ENCODE measurements at regions of chr3 and their contacts with region 1.

Region 1: DNA sequence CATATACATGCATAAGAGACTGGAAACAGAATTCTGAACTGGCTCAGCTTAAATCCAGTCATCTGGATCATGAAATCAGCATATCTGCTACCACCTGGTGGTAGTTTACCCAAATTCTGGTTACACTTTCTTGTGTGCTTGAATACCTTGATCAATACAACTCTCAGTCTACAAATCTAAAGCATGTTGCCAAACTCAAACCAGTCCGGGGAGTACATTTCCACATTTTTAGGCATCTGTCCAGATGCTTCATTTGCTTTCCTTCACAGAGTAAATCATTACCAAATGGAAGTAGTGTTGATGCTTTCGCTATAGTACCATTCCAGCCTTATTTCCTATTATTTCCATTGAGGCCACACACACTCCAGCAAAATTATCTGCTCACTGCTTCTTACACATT is 126.4 kb downstream of the P2RY1 start:
- DNase-seq: peak; percentile 60
- H3K4me3 Mint-ChIP-seq: no peak overlapping the region
- H3K27ac Mint-ChIP-seq: peak overlapping the region; percentile 40
- H3K4me1 Mint-ChIP-seq: peaks cover 14% of the 10 kb centered on the region
- H3K27me3 Mint-ChIP-seq: no peaks in the 10 kb centered on the region
- CTCF ChIP-seq: peak; percentile 33

Region 2: DNA sequence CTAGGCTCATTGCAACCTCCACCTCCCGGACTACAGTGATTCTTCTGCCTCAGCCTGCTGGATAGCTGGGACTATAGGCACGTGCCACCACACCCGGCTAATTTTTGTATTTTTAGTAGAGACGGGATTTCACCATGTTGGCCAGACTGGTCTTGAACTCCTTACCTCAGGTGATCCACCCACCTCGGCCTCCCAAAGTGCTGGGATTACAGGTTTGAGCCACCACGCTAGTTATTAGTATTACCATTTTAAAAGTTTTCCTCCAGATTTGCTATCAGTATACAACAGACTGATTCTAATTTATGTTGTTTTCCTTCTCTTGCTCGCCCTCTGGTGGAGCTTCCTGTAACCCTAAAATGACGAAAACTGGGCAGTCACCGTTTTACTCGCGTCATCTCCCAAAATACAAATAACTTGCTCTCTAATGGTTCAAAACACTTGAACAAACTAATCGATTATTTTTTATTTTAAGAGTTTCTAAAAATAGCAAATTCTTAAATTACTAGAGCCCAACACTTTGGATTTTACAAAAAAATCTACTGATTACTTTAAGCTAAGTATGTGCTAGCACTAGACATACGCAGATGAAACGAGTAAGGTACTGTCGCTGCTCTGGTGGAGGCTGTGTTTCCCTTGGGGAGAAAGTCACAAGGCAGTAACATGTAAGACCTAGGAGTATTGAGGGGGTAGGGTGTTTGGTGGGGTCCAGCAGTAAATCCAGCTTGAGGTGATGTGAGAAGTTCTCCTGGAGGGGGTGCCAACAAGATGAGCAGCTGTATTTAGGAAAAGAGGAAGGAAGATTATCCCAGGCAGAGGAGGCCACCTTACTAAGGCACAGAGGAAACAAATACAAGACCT is 489.3 kb before region 1 on chr3:
- CTCF ChIA-PET with region 1: interaction called, 4 read pairs
- POLR2A ChIA-PET with region 1: interaction called, 3 read pairs
- intact Hi-C with region 1: loop called (anchors 1 kb)
- DNase-seq: peak; percentile 59
- H3K4me3 Mint-ChIP-seq: no peak overlapping the region
- H3K27ac Mint-ChIP-seq: no peak overlapping the region
- H3K4me1 Mint-ChIP-seq: no peaks in the 10 kb centered on the region
- H3K27me3 Mint-ChIP-seq: no peaks in the 10 kb centered on the region
- CTCF ChIP-seq: peak; percentile 42

Region 3: DNA sequence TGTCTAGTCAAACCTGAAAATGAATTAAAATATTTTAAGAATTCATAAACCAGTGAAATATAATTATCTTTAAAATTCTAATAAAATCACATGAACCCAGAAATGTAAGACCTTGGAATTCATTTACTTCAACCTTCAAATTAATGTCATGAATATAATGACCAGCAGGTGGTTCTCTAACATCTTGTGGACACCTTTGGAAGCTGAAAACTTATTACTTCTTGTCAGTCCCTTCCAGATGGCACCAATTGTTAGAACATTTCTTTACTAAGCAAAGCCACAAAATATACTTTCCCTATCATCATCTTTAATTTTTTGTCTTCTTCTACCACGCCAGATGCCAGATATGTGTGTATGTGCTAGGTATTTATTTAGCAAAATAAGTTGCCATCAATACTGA is 452.6 kb before region 1 on chr3:
- CTCF ChIA-PET with region 1: interaction called, 28 read pairs
- POLR2A ChIA-PET with region 1: no interaction called
- intact Hi-C with region 1: no loop called
- DNase-seq: peak; percentile 31
- H3K4me3 Mint-ChIP-seq: no peak overlapping the region
- H3K27ac Mint-ChIP-seq: no peak overlapping the region
- H3K4me1 Mint-ChIP-seq: no peaks in the 10 kb centered on the region
- H3K27me3 Mint-ChIP-seq: no peaks in the 10 kb centered on the region
- CTCF ChIP-seq: peak; percentile 35

Region 4: DNA sequence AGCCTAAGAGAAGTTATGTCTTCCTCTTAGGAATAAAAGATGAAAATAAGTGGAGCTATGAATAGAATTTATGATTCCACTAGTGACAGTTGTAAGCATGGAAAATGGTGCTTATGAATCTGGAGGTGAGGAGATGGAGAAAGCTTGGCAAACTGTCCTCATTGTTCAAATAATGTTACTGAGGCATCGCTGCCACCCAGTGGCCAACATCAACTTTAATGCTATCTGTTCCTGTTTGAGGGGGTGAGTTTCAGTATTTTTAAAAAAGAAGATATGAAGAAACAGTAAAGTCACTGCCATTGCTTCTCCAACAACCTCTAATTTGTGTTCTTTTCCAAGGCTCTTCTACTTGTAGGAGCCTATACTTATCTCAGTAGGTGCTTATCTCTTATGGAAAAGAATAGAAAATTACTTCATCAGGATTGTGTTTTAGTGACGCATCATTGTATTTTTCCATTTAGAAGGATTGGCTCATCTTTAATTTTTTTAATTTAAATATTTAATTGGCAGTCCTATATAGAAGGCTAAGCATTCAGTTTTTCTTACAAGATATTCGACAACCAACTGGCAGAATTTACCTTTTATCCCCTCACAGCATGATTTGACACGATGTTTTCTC is 386.8 kb before region 1 on chr3:
- CTCF ChIA-PET with region 1: interaction called, 3 read pairs
- POLR2A ChIA-PET with region 1: no interaction called
- intact Hi-C with region 1: loop called (anchors 10 kb)
- DNase-seq: peak; percentile 69
- H3K4me3 Mint-ChIP-seq: no peak overlapping the region
- H3K27ac Mint-ChIP-seq: no peak overlapping the region
- H3K4me1 Mint-ChIP-seq: no peaks in the 10 kb centered on the region
- H3K27me3 Mint-ChIP-seq: no peaks in the 10 kb centered on the region
- CTCF ChIP-seq: peak; percentile 42

Region 5: GRCh38 chr3:152695840-152696239 is 265.5 kb before region 1 on chr3:
- CTCF ChIA-PET with region 1: interaction called, 6 read pairs
- POLR2A ChIA-PET with region 1: no interaction called
- intact Hi-C with region 1: loop called (anchors 5 kb)
- DNase-seq: no peak
- H3K4me3 Mint-ChIP-seq: no peak overlapping the region
- H3K27ac Mint-ChIP-seq: no peak overlapping the region
- H3K4me1 Mint-ChIP-seq: peaks cover 5% of the 10 kb centered on the region
- H3K27me3 Mint-ChIP-seq: no peaks in the 10 kb centered on the region
- CTCF ChIP-seq: no peak

Region 6: DNA sequence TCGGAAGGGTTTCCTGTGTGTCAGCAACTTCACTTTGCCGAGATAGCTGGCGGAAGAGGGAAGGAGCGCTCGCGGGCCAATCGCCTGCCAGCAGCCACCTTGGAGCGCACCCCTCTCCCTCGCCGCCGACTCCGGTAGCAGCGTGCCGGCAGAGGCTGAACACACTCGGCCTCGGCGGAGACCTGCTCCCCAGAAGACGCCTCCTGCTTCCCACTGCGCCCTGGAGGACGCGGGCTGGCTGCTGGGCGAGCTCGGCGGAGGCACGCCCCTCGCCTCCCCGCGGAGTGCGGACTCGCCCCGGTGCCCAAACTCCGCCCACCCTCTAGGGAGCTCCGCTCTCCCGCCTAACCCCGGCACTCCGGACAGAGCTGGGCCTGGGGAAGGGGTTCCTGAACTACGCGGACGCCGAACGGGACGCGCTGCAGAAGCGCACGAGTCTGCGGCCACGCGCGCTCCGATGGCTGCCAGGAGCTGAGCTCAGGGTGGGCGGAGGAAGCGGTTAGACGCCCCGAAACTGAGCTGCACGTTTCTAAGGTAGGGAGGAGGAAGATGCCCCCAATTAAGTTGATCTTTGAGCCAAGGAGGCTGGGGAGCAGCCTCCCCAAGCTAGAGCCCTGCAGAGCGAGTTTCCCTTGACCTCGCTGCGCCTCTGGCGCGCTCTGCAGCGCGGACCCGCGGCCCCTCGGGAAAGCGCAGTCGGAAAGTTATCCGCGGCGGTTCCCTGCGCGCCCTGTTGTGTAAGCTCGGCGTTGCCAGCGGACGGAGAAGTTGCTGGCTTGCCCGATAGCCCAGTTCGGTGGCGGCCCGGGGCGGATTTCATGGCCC is 126.3 kb before region 1 on chr3 and contains the start of gene P2RY1:
- CTCF ChIA-PET with region 1: interaction called, 20 read pairs
- POLR2A ChIA-PET with region 1: interaction called, 9 read pairs
- intact Hi-C with region 1: loop called (anchors 2 kb)
- DNase-seq: peak; percentile 75
- H3K4me3 Mint-ChIP-seq: peak within 1 kb of the TSS; percentile 96
- H3K27ac Mint-ChIP-seq: peak within 1 kb of the TSS; percentile 54
- H3K4me1 Mint-ChIP-seq: peaks cover 8% of the 10 kb centered on the region
- H3K27me3 Mint-ChIP-seq: no peaks in the 10 kb centered on the region
- CTCF ChIP-seq: peak; percentile 12
- total RNA-seq, gene P2RY1: 0.28 and 0.49 TPM in 2 replicates